Astrocyte of the cerebellum (primary cell): ENCODE measurements at regions of chr9 and their contacts with region 1.

Region 1: GRCh38 chr9:36341936-36342577 is 58.0 kb downstream of the RNF38 start:
- DNase-seq: no peak
- H3K4me3 ChIP-seq: no peak overlapping the region
- CTCF ChIP-seq: no peak

Region 2: DNA sequence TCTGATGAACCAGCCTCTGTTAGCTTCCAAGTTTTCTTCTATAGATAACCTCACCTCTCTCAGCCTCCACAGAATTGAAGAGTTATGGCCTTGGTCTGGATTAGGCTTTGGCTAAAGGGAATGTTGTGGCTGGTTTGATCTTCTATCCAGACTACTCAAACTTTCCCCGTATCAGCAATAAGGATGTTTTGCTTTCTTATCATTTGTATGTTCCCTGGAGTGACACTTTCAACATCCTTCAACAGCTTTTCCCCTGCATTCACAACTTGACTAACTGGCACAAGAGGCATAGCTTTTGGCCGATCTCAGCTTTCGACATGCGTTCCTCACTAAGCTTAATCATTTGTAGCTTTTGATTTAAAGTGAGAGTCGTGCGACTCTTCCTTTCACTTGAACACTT is 55.7 kb before region 1 on chr9:
- in situ Hi-C with region 1: loop called (anchors 5 kb)
- DNase-seq: no peak
- H3K4me3 ChIP-seq: no peak overlapping the region
- CTCF ChIP-seq: no peak